ENCODE measurements at regions of chr13 and their contacts with region 1.

Region 1: DNA sequence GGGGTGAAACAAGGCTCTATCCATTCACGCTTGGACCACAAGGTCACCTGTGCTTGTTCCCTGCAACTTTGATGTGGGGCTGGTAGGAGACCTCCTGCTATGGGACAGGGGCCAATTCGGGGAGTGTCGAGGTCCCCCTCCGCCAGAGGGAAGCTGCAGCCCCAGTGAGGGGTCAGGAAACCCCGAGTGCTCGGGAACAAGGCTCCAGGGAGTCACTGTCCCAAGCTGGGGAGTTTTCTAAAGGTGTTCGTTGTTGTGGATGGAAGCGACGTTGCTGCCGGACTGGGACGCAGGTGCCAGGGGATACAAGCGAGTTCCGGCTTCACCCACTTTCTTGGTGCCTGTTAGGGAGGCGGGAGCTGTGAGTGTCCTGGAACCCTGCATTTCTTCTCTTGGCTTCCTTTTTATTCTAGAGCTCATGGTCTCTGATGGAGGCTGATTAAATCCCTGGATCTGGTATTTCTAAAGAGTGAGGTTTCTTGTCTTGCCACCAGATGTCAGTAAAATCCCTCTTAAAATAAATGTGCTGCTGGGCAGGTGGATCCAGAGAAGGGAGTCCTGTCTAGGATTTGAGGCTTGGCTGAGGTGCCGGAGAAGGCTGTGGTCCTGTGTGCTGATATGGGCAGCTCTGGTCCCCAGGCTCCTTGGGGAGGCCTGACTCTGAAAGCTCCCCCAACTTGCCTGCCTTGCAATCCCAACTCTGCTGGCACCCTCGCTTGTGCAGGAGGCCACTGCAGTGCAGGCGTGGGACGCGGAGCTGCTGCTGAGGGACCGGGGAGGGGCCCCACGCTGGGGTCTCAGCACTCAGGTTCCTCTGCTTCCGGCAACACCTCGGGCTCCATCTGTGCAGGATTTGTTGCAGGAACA is 153.9 kb downstream of the TEX29 start:
- DNase-seq: peak; percentile 52
- H3K4me3 Mint-ChIP-seq: no peak overlapping the region
- H3K27ac Mint-ChIP-seq: no peak overlapping the region
- H3K4me1 Mint-ChIP-seq: no peaks in the 10 kb centered on the region
- H3K27me3 Mint-ChIP-seq: peaks cover 13% of the 10 kb centered on the region
- CTCF ChIP-seq: peak; percentile 38

Region 2: DNA sequence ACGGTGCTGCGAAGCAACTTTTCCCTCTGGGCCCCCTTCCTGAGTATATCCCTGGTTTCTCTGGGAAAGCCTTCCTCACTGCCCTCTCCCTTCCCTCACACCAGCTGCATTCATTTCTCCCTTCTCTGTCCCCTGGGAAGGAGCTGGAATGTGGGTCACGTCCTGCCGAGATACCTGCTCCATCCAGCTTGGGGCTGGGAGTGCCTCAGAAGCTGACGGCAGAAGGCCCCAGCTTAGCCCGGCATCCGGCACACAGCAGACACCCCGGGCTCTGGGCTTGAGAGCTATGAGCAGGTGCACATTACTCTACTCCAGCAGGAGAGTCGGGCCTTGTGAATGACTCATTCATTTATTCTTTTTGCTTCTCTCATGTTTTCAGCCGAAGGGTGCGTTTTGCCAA is 16.7 kb after region 1 on chr13:
- CTCF ChIA-PET with region 1: interaction called, 17 read pairs
- POLR2A ChIA-PET with region 1: no interaction called
- intact Hi-C with region 1: no loop called
- DNase-seq: no peak
- H3K4me3 Mint-ChIP-seq: no peak overlapping the region
- H3K27ac Mint-ChIP-seq: no peak overlapping the region
- H3K4me1 Mint-ChIP-seq: no peaks in the 10 kb centered on the region
- H3K27me3 Mint-ChIP-seq: no peaks in the 10 kb centered on the region
- CTCF ChIP-seq: no peak

Region 3: GRCh38 chr13:112452380-112453206 is 978.2 kb after region 1 on chr13:
- CTCF ChIA-PET with region 1: interaction called, 12 read pairs
- POLR2A ChIA-PET with region 1: no interaction called
- intact Hi-C with region 1: no loop called
- DNase-seq: no peak
- H3K4me3 Mint-ChIP-seq: no peak overlapping the region
- H3K27ac Mint-ChIP-seq: no peak overlapping the region
- H3K4me1 Mint-ChIP-seq: no peaks in the 10 kb centered on the region
- H3K27me3 Mint-ChIP-seq: no peaks in the 10 kb centered on the region
- CTCF ChIP-seq: no peak

Region 4: GRCh38 chr13:112606109-112607001 is 1132.0 kb after region 1 on chr13:
- CTCF ChIA-PET with region 1: interaction called, 39 read pairs
- POLR2A ChIA-PET with region 1: no interaction called
- intact Hi-C with region 1: loop called (anchors 1 kb)
- DNase-seq: peak; percentile 83
- H3K4me3 Mint-ChIP-seq: peak overlapping the region; percentile 74
- H3K27ac Mint-ChIP-seq: no peak overlapping the region
- H3K4me1 Mint-ChIP-seq: peaks cover 4% of the 10 kb centered on the region
- H3K27me3 Mint-ChIP-seq: peaks cover 65% of the 10 kb centered on the region
- CTCF ChIP-seq: peak; percentile 78

Measured in MCF 10A (cell line).